ENCODE measurements at regions of chr16 and their contacts with region 1.

Region 1: GRCh38 chr16:3129137-3130131 is 5.4 kb upstream of the ZNF213 start:
- DNase-seq: peak; percentile 44
- H3K4me3 ChIP-seq: peak overlapping the region; percentile 20 to 64 (median 52)
- H3K27ac ChIP-seq: peak overlapping the region; percentile 42 to 80 (median 66)
- H3K4me1 ChIP-seq: peaks cover 20 to 66% (median 42%) of the 10 kb centered on the region in 3 donors
- H3K27me3 ChIP-seq: no peaks in the 10 kb centered on the region
- CTCF ChIP-seq: peak; percentile 77 to 94 (median 90)
- POLR2A ChIP-seq: peak in 1 of 4 donors; percentile 20

Region 2: GRCh38 chr16:3059000-3059722 is 70.3 kb before region 1 on chr16:
- intact Hi-C with region 1: loop called (anchors 5 kb)
- DNase-seq: no peak
- H3K4me3 ChIP-seq: peak overlapping the region; percentile 58 to 90 (median 82)
- H3K27ac ChIP-seq: peak overlapping the region; percentile 78 to 84 (median 82)
- H3K4me1 ChIP-seq: peaks cover 16 to 28% (median 16%) of the 10 kb centered on the region in 3 donors
- H3K27me3 ChIP-seq: peaks cover 0 to 9% (median 0%) of the 10 kb centered on the region in 4 donors
- CTCF ChIP-seq: peak; percentile 87 to 100 (median 98)
- POLR2A ChIP-seq: peak in 1 of 4 donors; percentile 38

Region 3: GRCh38 chr16:3214904-3215600 is 85.6 kb after region 1 on chr16:
- intact Hi-C with region 1: no loop called
- DNase-seq: no peak
- H3K4me3 ChIP-seq: no peak overlapping the region
- H3K27ac ChIP-seq: peak overlapping the region in 1 of 4 donors; percentile 16
- H3K4me1 ChIP-seq: no peaks in the 10 kb centered on the region
- H3K27me3 ChIP-seq: peaks cover 0 to 3% (median 0%) of the 10 kb centered on the region in 4 donors
- CTCF ChIP-seq: no peak
- POLR2A ChIP-seq: no peak